ENCODE measurements at regions of chr5 and their contacts with region 1.

Region 1: DNA sequence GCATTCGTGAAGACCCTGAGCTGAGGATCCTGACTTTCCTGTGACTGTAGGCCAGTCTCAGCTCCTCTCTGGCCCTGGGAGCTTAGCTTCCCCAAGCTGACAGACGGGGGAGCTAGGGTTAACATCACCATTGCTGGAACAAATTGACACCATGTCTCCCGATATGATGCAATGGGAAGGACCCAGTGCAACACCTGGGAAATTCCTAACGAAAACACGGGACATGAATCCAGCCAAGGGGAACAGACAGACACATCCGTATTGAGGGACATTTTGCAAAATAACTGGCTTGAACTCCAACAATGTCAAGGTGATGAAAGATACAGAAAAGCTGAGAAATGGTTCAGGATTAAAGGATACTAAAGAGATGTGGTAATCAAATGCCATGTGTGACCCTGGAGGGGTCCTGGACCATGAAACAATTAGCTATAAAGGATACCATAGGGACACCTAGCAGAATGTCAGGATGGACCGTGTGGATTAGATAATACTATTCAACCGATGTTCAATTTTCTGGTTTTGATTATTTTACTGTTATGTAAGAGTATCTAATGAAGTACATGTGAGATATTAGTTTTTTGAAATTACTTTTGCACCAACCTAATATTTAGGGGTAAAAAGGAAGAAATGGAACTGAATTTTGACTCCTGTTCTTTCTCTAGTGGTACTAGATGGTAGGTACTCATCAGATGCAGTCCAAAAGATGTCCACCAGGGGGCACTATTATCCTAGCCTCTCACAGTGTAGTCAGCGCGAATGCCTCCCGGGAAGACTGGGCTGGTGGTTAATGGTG is 52.7 kb downstream of the NDST1 start:
- DNase-seq: peak; percentile 95
- H3K4me3 Mint-ChIP-seq: no peak overlapping the region
- H3K27ac Mint-ChIP-seq: peak overlapping the region; percentile 86
- H3K4me1 Mint-ChIP-seq: peaks cover 8% of the 10 kb centered on the region
- H3K27me3 Mint-ChIP-seq: no peaks in the 10 kb centered on the region
- CTCF ChIP-seq: peak; percentile 79

Region 2: GRCh38 chr5:150458819-150459557 is 101.6 kb before region 1 on chr5:
- CTCF ChIA-PET with region 1: interaction called, 8 read pairs
- intact Hi-C with region 1: loop called (anchors 2 kb)
- DNase-seq: peak; percentile 93
- H3K4me3 Mint-ChIP-seq: no peak overlapping the region
- H3K27ac Mint-ChIP-seq: no peak overlapping the region
- H3K4me1 Mint-ChIP-seq: peaks cover 7% of the 10 kb centered on the region
- H3K27me3 Mint-ChIP-seq: no peaks in the 10 kb centered on the region
- CTCF ChIP-seq: peak; percentile 94

Region 3: GRCh38 chr5:150656191-150657132 is 95.9 kb after region 1 on chr5:
- CTCF ChIA-PET with region 1: interaction called, 8 read pairs
- intact Hi-C with region 1: loop called (anchors 1 kb)
- DNase-seq: peak; percentile 88
- H3K4me3 Mint-ChIP-seq: peak overlapping the region; percentile 84
- H3K27ac Mint-ChIP-seq: peak overlapping the region; percentile 0
- H3K4me1 Mint-ChIP-seq: no peaks in the 10 kb centered on the region
- H3K27me3 Mint-ChIP-seq: peaks cover 53% of the 10 kb centered on the region
- CTCF ChIP-seq: peak; percentile 94

Region 4: GRCh38 chr5:150710165-150710564 is 149.6 kb after region 1 on chr5:
- CTCF ChIA-PET with region 1: interaction called, 3 read pairs
- intact Hi-C with region 1: loop called (anchors 1 kb)
- DNase-seq: peak; percentile 17
- H3K4me3 Mint-ChIP-seq: no peak overlapping the region
- H3K27ac Mint-ChIP-seq: no peak overlapping the region
- H3K4me1 Mint-ChIP-seq: no peaks in the 10 kb centered on the region
- H3K27me3 Mint-ChIP-seq: no peaks in the 10 kb centered on the region
- CTCF ChIP-seq: no peak

Region 5: GRCh38 chr5:150846654-150847333 is 286.2 kb after region 1 on chr5:
- CTCF ChIA-PET with region 1: no interaction called
- intact Hi-C with region 1: loop called (anchors 1 kb)
- DNase-seq: peak; percentile 53
- H3K4me3 Mint-ChIP-seq: no peak overlapping the region
- H3K27ac Mint-ChIP-seq: no peak overlapping the region
- H3K4me1 Mint-ChIP-seq: no peaks in the 10 kb centered on the region
- H3K27me3 Mint-ChIP-seq: peaks cover 66% of the 10 kb centered on the region
- CTCF ChIP-seq: peak; percentile 50